ENCODE measurements at regions of chr10 and their contacts with region 1.

Region 1: GRCh38 chr10:79415736-79416577 is 29.5 kb downstream of the ZCCHC24 start:
- DNase-seq: no peak
- CTCF ChIP-seq: no peak

Region 2: DNA sequence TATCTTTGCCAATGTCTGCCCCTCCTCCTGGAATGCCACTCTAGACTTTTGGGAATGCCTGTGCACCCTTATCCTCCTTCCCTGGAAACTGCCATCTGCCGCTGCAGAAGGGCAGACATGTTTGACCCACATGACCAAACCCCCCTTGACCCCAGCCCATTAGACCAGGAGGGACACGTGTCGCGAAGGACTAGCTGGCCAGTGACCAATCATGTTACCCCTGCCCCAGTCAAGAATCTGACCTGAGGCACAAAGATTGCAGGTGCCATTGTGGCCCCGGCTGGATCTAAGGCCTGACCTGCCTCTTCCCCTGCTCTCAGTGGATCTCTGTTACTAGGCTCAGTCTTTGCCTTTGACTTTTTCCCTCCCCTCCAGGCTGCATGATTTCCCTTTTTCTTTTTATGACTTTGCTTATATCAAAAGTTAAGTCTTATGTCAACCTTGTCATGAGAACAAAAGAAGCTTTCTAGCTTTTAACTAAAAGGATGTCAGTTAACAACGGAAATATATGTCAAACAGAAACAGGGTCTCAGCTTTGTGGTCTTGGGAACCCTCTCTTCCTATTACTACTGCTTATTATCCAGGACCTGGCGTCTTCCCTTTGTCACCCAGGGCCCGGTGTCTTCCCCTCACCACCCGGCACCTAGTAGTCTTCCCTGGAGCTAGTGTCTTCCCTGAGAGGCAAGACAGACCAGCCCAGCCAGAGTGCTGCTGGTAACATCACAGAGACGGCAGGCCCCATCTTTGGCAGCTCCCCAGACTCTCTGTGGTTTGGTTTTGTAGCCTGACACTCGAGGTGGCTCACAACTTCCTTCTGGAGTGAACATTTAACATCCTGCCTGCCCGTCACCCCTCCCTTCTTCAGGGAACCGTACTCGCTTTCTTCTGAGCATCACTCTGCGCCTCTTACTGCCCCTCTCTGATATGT is 93.1 kb before region 1 on chr10:
- CTCF ChIA-PET with region 1: no interaction called
- POLR2A ChIA-PET with region 1: no interaction called
- DNase-seq: no peak
- CTCF ChIP-seq: no peak

Region 3: DNA sequence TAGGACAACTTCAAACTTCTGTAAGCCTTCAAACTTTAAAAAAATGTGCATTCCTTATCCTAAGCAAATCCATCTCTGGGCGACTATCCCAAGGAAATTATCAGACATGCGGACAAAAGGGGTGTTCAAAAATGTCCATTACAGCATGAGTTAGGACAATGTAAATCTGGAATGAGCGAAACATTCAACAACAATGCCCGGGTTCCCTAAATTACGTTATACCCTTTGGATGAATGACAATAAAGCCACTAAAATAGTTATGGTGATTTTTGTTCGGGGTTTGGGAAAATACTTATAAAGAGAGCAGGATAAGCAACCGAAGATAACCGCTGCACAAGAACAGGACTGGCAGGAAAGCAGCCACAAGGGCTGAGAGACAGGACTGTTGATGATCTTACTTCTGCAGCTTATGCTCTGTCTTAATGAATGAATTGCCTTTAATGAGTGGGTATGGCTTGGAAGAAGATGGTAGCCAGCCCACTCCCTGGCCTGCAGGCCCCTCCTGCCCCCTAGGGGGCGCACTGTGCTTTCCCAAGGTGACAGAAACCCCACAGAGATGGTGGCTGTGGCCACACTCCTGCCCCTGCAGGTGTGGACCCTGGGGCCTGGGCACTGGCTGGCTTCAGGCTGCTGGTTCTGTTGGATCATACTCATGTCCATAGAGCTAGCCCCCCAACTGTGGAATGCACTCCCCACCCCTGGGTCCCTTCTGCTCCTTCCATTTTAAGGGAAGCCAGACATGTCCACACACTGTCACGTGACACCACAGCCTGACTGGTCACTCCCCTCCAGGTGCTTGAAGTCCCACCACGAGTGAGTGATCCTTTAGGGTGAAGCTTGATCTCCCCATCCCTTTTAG is 15.6 kb before region 1 on chr10:
- CTCF ChIA-PET with region 1: interaction called, 11 read pairs
- POLR2A ChIA-PET with region 1: no interaction called
- DNase-seq: peak; percentile 83
- CTCF ChIP-seq: peak; percentile 58

Region 4: GRCh38 chr10:79608505-79609375 is 192.8 kb after region 1 on chr10:
- CTCF ChIA-PET with region 1: no interaction called
- POLR2A ChIA-PET with region 1: no interaction called
- DNase-seq: peak; percentile 45
- CTCF ChIP-seq: peak; percentile 31